Mammary epithelial cell (primary cell): ENCODE measurements at regions of chr11 and their contacts with region 1.

Region 1: DNA sequence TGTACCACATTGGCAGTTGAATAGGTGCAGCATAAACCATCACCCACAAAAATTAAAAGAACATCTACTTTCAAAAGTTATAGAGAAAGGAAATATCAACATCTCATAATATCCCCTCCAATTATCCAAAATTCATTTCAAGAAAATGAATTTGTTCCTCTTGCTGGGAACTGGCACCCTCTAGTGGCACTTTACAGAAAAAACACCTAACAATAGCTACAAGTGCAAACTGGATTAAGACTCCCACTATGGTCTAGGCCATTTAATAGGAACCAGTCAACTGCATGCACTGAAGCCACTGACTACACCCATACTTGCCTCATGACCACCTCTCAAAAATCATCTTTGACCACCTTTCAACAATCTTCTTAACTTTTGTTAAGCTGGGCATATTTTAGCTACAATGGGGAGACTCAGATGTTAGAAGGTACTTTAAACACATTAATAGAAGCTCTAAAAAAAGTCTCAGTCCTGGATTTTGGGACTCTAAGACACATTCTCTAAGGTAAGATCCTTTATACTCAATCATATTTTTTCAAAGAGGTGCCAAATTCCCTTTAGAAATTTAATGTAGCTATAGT is 17.3 kb downstream of the TRAF6 start:
- DNase-seq: peak; percentile 26
- H3K4me3 ChIP-seq: no peak overlapping the region
- H3K27ac ChIP-seq: no peak overlapping the region
- H3K4me1 ChIP-seq: no peaks in the 10 kb centered on the region
- H3K27me3 ChIP-seq: no peaks in the 10 kb centered on the region
- CTCF ChIP-seq: peak; percentile 75 to 77

Region 2: DNA sequence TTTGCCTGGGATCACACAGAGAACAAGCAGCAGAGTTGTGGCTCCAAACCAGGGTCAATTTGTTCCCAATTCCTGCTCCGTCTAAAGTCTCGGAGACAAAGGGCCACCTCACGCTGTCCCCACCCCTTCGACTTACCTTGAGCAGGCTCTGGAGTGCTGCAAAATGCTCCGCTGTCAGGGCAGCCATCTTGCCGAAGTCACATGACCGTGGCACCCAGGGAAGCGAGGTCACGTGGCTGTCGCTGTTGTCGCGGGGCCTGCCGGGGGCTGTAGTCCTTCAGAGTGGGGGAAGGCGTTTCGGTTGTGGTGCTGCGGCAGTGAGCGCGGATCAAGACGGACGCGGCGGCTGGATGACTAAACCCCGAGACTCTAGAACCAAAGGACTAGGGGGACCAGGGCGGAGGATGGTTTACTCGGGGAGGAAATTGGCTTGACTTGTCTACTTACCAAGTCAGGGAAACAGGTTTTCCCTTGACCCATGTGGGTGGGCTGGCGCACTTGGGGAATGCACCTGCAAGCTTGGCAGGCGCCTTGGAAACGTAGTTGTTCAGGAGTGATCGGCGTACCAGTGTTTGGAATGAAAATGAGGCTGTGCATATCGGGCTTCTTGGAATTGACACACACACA is 203.5 kb before region 1 on chr11 and contains the start of gene COMMD9:
- CTCF ChIA-PET with region 1: no interaction called
- dilution Hi-C with region 1: no loop called
- in situ Hi-C with region 1: loop called in 1 of 2 experiments (anchors 5 kb)
- intact Hi-C with region 1: loop called (anchors 1 kb)
- DNase-seq: peak; percentile 91
- H3K4me3 ChIP-seq: peak within 1 kb of the TSS; percentile 66 to 97 (median 94)
- H3K27ac ChIP-seq: peak within 1 kb of the TSS; percentile 48
- H3K4me1 ChIP-seq: peaks cover 13% of the 10 kb centered on the region
- H3K27me3 ChIP-seq: no peaks in the 10 kb centered on the region
- CTCF ChIP-seq: no peak
- total RNA-seq, gene COMMD9: 30.7 to 46.5 TPM

Region 3: GRCh38 chr11:36296895-36297604 is 195.8 kb before region 1 on chr11:
- CTCF ChIA-PET with region 1: interaction called, 7 read pairs
- dilution Hi-C with region 1: loop called (anchors 5 kb)
- in situ Hi-C with region 1: no loop called
- intact Hi-C with region 1: loop called (anchors 1 kb)
- DNase-seq: no peak
- H3K4me3 ChIP-seq: no peak overlapping the region
- H3K27ac ChIP-seq: no peak overlapping the region
- H3K4me1 ChIP-seq: no peaks in the 10 kb centered on the region
- H3K27me3 ChIP-seq: no peaks in the 10 kb centered on the region
- CTCF ChIP-seq: no peak

Region 4: DNA sequence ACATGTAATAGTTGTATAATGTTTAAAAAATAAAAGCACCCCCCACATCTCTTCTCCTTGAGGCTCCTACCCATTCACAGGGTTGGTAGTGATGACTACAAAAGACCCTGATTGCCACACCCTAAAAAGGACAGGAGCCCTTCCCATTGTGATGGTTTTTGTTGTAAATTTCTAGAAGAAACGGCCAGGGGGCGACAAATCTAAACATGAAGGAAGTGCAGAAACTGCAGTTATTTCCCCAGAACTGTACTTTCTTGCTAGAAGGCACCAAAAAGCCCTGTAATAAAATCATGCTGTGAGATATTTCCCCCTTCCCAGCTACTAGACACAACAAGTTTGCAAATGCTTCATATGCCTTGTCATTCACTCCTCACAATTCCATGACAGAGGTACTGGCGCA is 185.9 kb before region 1 on chr11:
- CTCF ChIA-PET with region 1: no interaction called
- dilution Hi-C with region 1: no loop called
- in situ Hi-C with region 1: no loop called
- intact Hi-C with region 1: loop called (anchors 1 kb)
- DNase-seq: no peak
- H3K4me3 ChIP-seq: no peak overlapping the region
- H3K27ac ChIP-seq: no peak overlapping the region
- H3K4me1 ChIP-seq: peaks cover 18% of the 10 kb centered on the region
- H3K27me3 ChIP-seq: no peaks in the 10 kb centered on the region
- CTCF ChIP-seq: peak; percentile 28 to 42

Region 5: GRCh38 chr11:36657610-36658267 is 164.9 kb after region 1 on chr11:
- CTCF ChIA-PET with region 1: no interaction called
- dilution Hi-C with region 1: no loop called
- in situ Hi-C with region 1: no loop called
- intact Hi-C with region 1: no loop called
- DNase-seq: no peak
- H3K4me3 ChIP-seq: no peak overlapping the region
- H3K27ac ChIP-seq: no peak overlapping the region
- H3K4me1 ChIP-seq: no peaks in the 10 kb centered on the region
- H3K27me3 ChIP-seq: no peaks in the 10 kb centered on the region
- CTCF ChIP-seq: no peak